WTC11 (cell line): ENCODE measurements at regions of chr3 and their contacts with region 1.

Region 1: GRCh38 chr3:46923559-46924350 is 46.2 kb downstream of the PTH1R start:
- DNase-seq: peak; percentile 69
- ATAC-seq: peak; percentile 84
- H3K4me3 Mint-ChIP-seq: no peak overlapping the region
- H3K27ac Mint-ChIP-seq: no peak overlapping the region
- H3K4me1 Mint-ChIP-seq: no peaks in the 10 kb centered on the region
- H3K27me3 Mint-ChIP-seq: no peaks in the 10 kb centered on the region; the same call in 1 of the 2 replicates
- CTCF ChIP-seq: peak; percentile 37; the same call in 1 of the 2 replicates

Region 2: DNA sequence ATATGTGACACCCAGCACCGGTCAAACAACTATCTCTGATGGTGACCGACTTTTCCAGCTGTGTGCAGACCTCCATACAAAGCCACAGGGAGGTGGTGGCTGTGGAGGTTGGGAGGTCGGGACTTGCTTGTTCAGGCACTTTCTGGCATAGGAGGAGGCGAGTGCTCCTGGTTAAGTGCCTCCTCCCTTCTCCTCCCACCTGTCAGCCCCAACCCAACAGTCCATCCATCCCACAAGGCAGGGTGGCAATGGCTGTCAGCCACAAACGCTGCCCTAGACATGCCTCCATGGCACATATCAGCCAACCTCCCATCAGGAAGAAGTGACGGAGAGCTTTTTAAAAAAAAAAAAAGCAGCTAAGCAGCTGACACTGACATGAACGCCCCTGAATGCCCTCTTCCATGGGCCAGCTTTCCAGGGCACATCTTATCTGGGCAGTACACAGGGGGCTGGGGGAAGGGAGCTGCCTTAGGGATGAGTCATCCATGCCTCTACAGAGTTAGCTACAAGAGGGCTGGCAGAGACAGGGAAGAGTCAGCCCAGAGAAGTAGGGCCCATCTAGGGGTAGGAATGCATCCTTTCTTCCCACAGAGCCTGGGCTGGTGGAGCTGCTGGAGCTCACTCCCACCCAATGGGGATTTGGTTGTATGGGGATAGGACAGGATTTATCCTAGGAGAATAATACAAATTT is 11.6 kb after region 1 on chr3:
- CTCF ChIA-PET with region 1: interaction called, 39 read pairs
- POLR2A ChIA-PET with region 1: interaction called, 3 read pairs
- DNase-seq: peak; percentile 62
- ATAC-seq: peak; percentile 95
- H3K4me3 Mint-ChIP-seq: no peak overlapping the region
- H3K27ac Mint-ChIP-seq: peak overlapping the region; percentile 91; the same call in 1 of the 2 replicates
- H3K4me1 Mint-ChIP-seq: peaks cover 31% of the 10 kb centered on the region
- H3K27me3 Mint-ChIP-seq: no peaks in the 10 kb centered on the region
- CTCF ChIP-seq: no peak

Region 3: DNA sequence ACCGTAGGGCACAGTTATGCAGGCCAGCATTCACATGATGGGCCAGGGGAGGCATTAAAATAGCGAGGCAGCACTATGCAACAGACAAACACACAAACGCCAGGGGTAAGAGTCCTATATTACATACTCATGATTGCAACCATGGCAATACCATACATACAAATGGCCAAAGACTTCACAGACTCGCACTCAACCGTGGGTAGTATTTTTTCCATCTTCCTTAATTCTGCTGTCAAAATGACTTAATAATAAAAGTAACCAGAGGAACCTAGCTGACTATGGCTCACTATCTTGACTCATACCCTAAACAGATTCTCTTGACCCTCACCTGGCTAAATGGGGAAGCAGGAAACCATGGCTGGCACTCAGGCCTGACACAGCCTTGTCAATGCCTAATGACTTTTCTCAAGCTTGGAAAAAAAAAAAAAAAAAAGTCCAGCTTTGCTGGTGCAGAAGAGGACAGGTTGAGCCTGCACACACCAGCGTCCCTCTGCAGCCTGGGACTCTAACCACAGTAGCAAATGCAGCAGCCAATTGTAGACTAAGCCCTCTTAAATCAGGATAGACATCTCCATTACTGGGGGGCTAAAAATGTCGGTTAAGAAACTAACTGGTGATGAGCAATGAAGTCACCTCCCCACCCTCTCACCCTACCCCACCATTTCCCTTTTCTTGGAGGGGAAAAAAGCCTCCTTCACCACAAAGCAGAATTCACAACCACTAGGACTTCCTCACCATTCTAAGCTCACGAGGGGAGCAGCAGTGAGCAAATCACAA is 29.7 kb after region 1 on chr3:
- CTCF ChIA-PET with region 1: interaction called, 15 read pairs
- POLR2A ChIA-PET with region 1: no interaction called
- DNase-seq: no peak
- ATAC-seq: no peak
- H3K4me3 Mint-ChIP-seq: no peak overlapping the region
- H3K27ac Mint-ChIP-seq: peak overlapping the region; percentile 54; the same call in 1 of the 2 replicates
- H3K4me1 Mint-ChIP-seq: peaks cover 48% of the 10 kb centered on the region
- H3K27me3 Mint-ChIP-seq: no peaks in the 10 kb centered on the region
- CTCF ChIP-seq: no peak

Region 4: DNA sequence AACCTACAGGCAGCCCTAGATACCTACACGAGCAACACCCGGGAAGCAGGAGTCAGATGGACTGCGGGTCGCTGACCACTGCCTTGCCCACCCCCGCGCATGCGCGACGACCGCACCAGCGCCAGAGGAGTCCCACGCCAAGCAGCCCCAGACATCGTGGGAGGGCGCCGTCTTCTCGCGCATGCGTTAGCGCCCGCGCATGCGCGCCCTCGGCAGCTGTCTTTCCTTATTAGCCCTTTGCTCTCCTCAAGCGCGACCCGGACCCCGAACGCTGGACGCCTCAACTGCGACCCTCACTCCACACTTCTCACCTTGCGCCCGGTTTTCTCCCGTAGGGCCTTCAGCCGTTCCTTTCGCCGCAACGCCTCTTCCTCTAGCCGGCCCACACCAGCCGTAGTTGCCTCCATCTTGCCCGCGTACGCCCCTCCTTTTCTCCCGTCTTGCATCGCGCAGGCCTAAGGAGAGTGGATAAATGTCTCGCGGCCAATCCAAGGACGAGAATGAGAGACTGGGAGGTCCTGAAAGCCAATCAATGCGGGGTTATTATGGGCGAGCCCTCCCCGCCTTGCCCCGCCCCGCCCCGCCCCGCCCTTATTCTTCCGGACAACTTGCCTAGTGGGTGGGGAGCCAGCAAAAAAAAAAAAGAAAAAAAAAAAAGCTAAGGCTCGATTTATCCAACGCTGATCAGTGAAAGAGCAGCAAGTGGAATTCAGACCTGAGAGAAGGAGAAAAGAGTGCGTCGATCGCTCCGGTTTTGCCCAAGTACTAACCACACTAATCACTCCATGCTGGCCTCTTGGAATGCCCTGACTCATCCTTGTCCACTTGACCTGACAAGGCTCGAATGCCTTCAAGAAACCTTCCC is 52.8 kb after region 1 on chr3 and contains the start of gene CCDC12:
- CTCF ChIA-PET with region 1: interaction called, 35 read pairs
- POLR2A ChIA-PET with region 1: no interaction called
- DNase-seq: peak; percentile 91
- ATAC-seq: peak; percentile 81
- H3K4me3 Mint-ChIP-seq: peak within 1 kb of the TSS; percentile 98
- H3K27ac Mint-ChIP-seq: peak within 1 kb of the TSS; percentile 99
- H3K4me1 Mint-ChIP-seq: peaks cover 25% of the 10 kb centered on the region
- H3K27me3 Mint-ChIP-seq: peaks cover 5% of the 10 kb centered on the region
- CTCF ChIP-seq: no peak
- total RNA-seq, gene CCDC12: 50.3 to 59.1 TPM (median 55.9 TPM) in 3 replicates

Region 5: DNA sequence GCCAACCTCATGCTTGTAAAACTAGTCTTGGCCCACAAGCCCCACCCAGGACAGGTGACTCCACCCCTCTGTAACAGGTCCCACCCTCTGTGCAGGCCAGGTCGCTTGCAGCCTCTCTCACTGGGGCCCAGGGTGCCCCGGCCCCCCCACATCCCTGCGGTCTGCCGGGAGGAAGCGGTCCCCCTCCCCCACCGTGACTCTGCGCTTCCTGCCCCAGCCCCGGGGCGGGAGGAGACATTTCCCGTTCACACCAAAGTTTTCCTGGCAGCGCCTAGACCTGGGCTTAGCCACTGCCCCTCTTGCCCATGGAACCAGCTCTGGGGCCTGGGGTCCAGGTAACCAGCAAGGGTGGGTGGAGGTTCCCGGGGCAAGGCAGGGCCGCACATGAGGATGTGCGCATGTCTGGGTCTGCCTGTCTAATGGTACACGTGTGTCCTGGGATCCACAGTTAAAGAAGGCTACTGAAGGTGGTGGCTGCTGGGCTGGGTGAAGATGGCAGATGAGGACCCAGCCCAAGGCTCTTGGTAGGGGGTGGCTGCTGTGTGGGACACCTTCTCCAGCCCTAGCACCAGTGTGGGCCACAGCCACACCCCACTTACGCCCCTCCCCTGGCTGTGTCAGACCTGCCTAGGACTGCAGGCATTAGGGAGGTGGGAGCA is 64.1 kb after region 1 on chr3:
- CTCF ChIA-PET with region 1: interaction called, 35 read pairs
- POLR2A ChIA-PET with region 1: no interaction called
- DNase-seq: peak; percentile 66
- ATAC-seq: peak; percentile 85
- H3K4me3 Mint-ChIP-seq: no peak overlapping the region
- H3K27ac Mint-ChIP-seq: no peak overlapping the region
- H3K4me1 Mint-ChIP-seq: peaks cover 32% of the 10 kb centered on the region
- H3K27me3 Mint-ChIP-seq: no peaks in the 10 kb centered on the region
- CTCF ChIP-seq: no peak

Region 6: GRCh38 chr3:46998121-46998851 is 74.5 kb after region 1 on chr3:
- CTCF ChIA-PET with region 1: interaction called, 59 read pairs
- POLR2A ChIA-PET with region 1: no interaction called
- DNase-seq: peak; percentile 93
- ATAC-seq: peak; percentile 86
- H3K4me3 Mint-ChIP-seq: no peak overlapping the region
- H3K27ac Mint-ChIP-seq: peak overlapping the region; percentile 94
- H3K4me1 Mint-ChIP-seq: peaks cover 3% of the 10 kb centered on the region
- H3K27me3 Mint-ChIP-seq: no peaks in the 10 kb centered on the region
- CTCF ChIP-seq: peak; percentile 87